GM13976 (cell line): ENCODE measurements at regions of chr11 and their contacts with region 1.

Region 1: GRCh38 chr11:118198370-118198769 is 21.9 kb upstream of the SCN2B start:
- DNase-seq: peak; percentile 81
- CTCF ChIP-seq: peak; percentile 82

Region 2: DNA sequence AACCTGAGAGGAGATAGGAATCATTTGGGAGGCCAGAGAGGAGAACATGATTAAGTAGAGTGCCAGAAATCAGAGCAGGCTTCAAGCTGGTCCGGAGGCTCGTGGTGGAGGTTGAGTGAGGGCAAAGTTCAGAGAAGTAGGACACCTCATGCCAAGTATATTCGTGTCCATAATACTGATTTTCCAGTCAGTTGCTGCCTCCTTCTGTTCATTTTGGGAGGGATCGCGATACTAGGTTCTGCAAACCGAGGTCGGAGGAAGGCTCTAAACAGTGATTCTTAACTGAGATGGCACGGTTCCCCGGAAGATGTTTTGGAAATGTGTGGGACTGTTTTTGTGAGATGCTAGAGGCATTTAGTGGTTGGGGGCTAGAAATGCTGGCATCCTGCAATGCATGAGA is 92.6 kb after region 1 on chr11:
- in situ Hi-C with region 1: loop called (anchors 10 kb)
- DNase-seq: peak; percentile 48
- CTCF ChIP-seq: peak; percentile 66

Region 3: DNA sequence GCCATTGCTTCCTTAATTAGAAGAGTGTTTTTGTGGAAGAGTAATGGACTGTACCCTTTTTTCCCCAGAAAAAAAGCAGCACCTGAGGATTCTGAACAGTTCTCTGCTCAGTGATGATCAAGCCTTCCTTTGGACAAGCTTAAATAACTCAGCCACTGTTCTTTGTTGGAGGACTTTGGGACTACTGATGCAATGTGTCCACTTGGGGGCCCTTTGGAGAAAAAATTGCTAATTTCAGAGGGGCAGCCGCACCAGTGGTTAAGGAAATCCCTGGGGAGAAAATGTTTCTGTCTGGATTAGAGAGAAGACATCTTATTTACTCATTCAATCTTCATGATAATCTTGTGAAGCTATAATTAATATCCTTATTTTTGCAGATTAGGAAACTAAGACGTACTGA is 232.6 kb after region 1 on chr11:
- in situ Hi-C with region 1: no loop called
- DNase-seq: no peak
- CTCF ChIP-seq: no peak

Region 4: DNA sequence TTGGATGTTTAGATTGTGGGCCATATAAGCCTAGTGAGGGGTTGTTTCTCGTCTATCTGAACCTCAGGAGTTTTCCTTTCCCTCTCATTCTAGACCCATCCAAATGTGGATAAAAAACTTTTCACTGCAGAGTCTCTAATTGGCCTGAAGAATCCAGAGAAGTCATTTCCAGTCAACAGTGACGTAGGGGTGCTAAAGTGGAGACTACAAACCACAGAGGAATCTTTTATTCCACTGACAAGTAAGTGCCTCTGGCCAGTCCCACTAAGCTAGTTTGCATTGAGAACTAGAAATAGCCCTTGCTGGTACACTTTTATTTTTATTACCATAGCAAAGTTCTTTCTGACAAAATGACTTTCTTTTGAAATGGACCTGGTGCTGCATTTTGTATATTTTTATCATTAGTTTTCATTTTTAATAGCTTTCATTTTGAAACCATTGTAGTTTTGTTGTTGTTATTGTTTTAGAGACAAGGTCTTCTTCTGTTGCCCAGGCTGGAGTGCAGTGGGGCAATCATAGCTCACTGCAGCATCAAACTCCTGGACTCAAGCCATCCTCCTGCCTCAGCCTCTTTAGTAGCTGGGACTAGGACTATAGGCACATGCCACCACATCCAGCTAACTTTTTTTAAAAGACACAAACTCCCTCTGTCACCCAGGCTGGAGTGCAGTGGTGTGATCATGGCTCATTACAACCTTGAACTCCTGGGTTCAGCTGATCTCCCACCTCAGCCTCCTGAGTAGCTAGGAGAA is 394.4 kb after region 1 on chr11:
- in situ Hi-C with region 1: no loop called
- DNase-seq: no peak
- CTCF ChIP-seq: no peak